ENCODE measurements at regions of chr3 and their contacts with region 1.

Region 1: GRCh38 chr3:11835028-11835639 is 11.6 kb downstream of the TAMM41 start:
- DNase-seq: peak in 2 of 4 experiments; percentile 44 to 50
- ATAC-seq: no peak
- H3K4me3 ChIP-seq: no peak overlapping the region
- H3K27ac ChIP-seq: no peak overlapping the region
- H3K4me1 ChIP-seq: no peaks in the 10 kb centered on the region
- H3K27me3 ChIP-seq: no peaks in the 10 kb centered on the region
- CTCF ChIP-seq: peak in 2 of 3 experiments; percentile 15 to 58; a peak in 3 of 6 replicates
- EP300 ChIP-seq: no peak
- POLR2A ChIP-seq: no peak
- RAD21 ChIP-seq: peak; percentile 12 to 38; a peak in 1 of 4 replicates

Region 2: DNA sequence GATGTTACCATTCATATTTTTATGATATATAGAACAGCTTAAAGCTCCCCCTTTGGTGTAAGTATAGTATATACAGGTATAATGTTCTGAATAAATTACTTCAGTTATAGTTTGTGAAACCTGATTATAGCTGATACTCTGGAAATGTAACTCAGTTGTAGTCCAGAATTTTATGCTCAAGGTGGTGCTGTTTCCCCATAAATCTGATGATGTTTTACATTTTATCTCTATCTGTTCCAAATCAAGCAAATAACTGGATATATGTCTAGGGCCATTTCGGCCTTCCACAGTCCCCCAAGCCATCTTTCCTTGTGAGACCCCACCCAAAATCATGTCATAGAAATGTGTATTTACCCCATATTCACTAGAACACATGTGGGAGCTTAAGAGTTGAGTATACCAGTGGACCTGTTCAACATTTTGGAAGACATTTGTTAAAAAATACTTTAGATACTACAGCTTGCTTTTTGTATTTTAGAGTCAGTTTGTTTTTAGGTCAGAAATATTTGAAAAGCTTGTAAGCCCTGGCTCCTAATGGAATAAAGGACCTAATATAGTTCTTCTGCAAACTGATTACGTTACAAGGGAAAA is 455.8 kb before region 1 on chr3:
- CTCF ChIA-PET with region 1: interaction called, 11 read pairs
- POLR2A ChIA-PET with region 1: no interaction called
- in situ Hi-C with region 1: no loop called
- intact Hi-C with region 1: loop called (anchors 10 kb)
- DNase-seq: peak in 2 of 4 experiments; percentile 19 to 29
- ATAC-seq: peak; percentile 74
- H3K4me3 ChIP-seq: no peak overlapping the region
- H3K27ac ChIP-seq: no peak overlapping the region
- H3K4me1 ChIP-seq: no peaks in the 10 kb centered on the region
- H3K27me3 ChIP-seq: no peaks in the 10 kb centered on the region
- CTCF ChIP-seq: peak; percentile 56 to 82 (median 59); a peak in 5 of 6 replicates
- EP300 ChIP-seq: no peak
- POLR2A ChIP-seq: no peak
- RAD21 ChIP-seq: peak; percentile 81 to 88

Measured in K562 (cell line).